ENCODE measurements at regions of chr19 and their contacts with region 1.

Region 1: GRCh38 chr19:53147645-53148044 is 11.2 kb downstream of the ZNF347 start:
- DNase-seq: no peak
- H3K4me3 ChIP-seq: no peak overlapping the region
- H3K27ac ChIP-seq: no peak overlapping the region
- H3K4me1 ChIP-seq: no peaks in the 10 kb centered on the region
- H3K27me3 ChIP-seq: no peaks in the 10 kb centered on the region
- CTCF ChIP-seq: no peak
- POLR2A ChIP-seq: no peak

Region 2: GRCh38 chr19:52679598-52679997 is 468.0 kb before region 1 on chr19:
- CTCF ChIA-PET with region 1: no interaction called
- POLR2A ChIA-PET with region 1: interaction called, 10 read pairs
- dilution Hi-C with region 1: no loop called
- intact Hi-C with region 1: no loop called
- DNase-seq: no peak
- H3K4me3 ChIP-seq: no peak overlapping the region
- H3K27ac ChIP-seq: no peak overlapping the region
- H3K4me1 ChIP-seq: no peaks in the 10 kb centered on the region
- H3K27me3 ChIP-seq: no peaks in the 10 kb centered on the region
- CTCF ChIP-seq: no peak
- POLR2A ChIP-seq: no peak

Region 3: GRCh38 chr19:53091413-53092254 is 56.0 kb before region 1 on chr19:
- CTCF ChIA-PET with region 1: no interaction called
- POLR2A ChIA-PET with region 1: no interaction called
- dilution Hi-C with region 1: no loop called
- intact Hi-C with region 1: no loop called
- DNase-seq: no peak
- H3K4me3 ChIP-seq: no peak overlapping the region
- H3K27ac ChIP-seq: no peak overlapping the region
- H3K4me1 ChIP-seq: peaks cover 18% of the 10 kb centered on the region
- H3K27me3 ChIP-seq: no peaks in the 10 kb centered on the region
- CTCF ChIP-seq: no peak
- POLR2A ChIP-seq: no peak

Region 4: GRCh38 chr19:53103198-53103944 is 44.3 kb before region 1 on chr19 and contains the start of gene ZNF160:
- CTCF ChIA-PET with region 1: no interaction called
- POLR2A ChIA-PET with region 1: no interaction called
- dilution Hi-C with region 1: no loop called
- intact Hi-C with region 1: no loop called
- DNase-seq: peak; percentile 98
- H3K4me3 ChIP-seq: peak within 1 kb of the TSS; percentile 79 to 93 (median 90)
- H3K27ac ChIP-seq: peak within 1 kb of the TSS; percentile 94
- H3K4me1 ChIP-seq: peaks cover 11% of the 10 kb centered on the region
- H3K27me3 ChIP-seq: no peaks in the 10 kb centered on the region
- CTCF ChIP-seq: no peak
- POLR2A ChIP-seq: peak; percentile 72
- total RNA-seq, gene ZNF160: 16.4 and 19.7 TPM in 2 replicates

Region 5: GRCh38 chr19:53195265-53195903 is 47.7 kb after region 1 on chr19:
- CTCF ChIA-PET with region 1: no interaction called
- POLR2A ChIA-PET with region 1: no interaction called
- dilution Hi-C with region 1: no loop called
- intact Hi-C with region 1: no loop called
- DNase-seq: peak; percentile 82
- H3K4me3 ChIP-seq: no peak overlapping the region
- H3K27ac ChIP-seq: no peak overlapping the region
- H3K4me1 ChIP-seq: peaks cover 2% of the 10 kb centered on the region
- H3K27me3 ChIP-seq: no peaks in the 10 kb centered on the region
- CTCF ChIP-seq: peak; percentile 83
- POLR2A ChIP-seq: no peak